Panc1 (cell line): ENCODE measurements at regions of chr7 and their contacts with region 1.

Region 1: GRCh38 chr7:156993021-156993924 is 17.2 kb downstream of the MNX1 start:
- DNase-seq: no peak
- ATAC-seq: no peak
- H3K4me3 ChIP-seq: no peak overlapping the region
- H3K27ac ChIP-seq: no peak overlapping the region
- H3K4me1 ChIP-seq: no peaks in the 10 kb centered on the region
- H3K27me3 ChIP-seq: no peaks in the 10 kb centered on the region
- CTCF ChIP-seq: no peak

Region 2: DNA sequence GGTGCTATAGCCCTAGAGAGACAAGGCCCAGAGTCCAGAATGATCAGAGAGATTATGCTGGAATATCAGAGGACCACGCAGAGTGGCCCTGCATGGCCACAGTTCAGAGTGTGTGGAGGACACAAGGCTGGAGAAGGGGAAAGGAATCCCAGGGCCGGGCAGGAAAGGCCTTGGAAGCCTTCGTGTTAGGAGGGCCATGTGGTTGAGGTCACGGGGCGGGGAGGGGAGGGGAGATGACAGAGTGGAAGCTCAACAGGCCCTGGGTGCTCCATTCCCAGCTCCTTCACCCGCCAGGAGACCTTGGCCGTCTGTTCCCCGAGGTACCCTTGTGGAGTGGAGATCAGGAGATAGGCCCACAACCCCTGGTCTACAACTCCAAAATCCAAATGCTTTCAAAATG is 1548.5 kb before region 1 on chr7:
- CTCF ChIA-PET with region 1: no interaction called
- POLR2A ChIA-PET with region 1: interaction called, 13 read pairs
- in situ Hi-C with region 1: no loop called
- intact Hi-C with region 1: no loop called
- DNase-seq: no peak
- ATAC-seq: no peak
- H3K4me3 ChIP-seq: no peak overlapping the region
- H3K27ac ChIP-seq: no peak overlapping the region
- H3K4me1 ChIP-seq: peaks cover 6% of the 10 kb centered on the region; the same call in 1 of the 2 replicates
- H3K27me3 ChIP-seq: peaks cover 21% of the 10 kb centered on the region
- CTCF ChIP-seq: no peak

Region 3: GRCh38 chr7:157189405-157189804 is 196.1 kb after region 1 on chr7:
- CTCF ChIA-PET with region 1: no interaction called
- POLR2A ChIA-PET with region 1: interaction called, 13 read pairs
- in situ Hi-C with region 1: no loop called
- intact Hi-C with region 1: no loop called
- DNase-seq: no peak
- ATAC-seq: no peak
- H3K4me3 ChIP-seq: no peak overlapping the region
- H3K27ac ChIP-seq: no peak overlapping the region
- H3K4me1 ChIP-seq: no peaks in the 10 kb centered on the region
- H3K27me3 ChIP-seq: no peaks in the 10 kb centered on the region
- CTCF ChIP-seq: no peak